ENCODE measurements at regions of chr2 and their contacts with region 1.

Region 1: DNA sequence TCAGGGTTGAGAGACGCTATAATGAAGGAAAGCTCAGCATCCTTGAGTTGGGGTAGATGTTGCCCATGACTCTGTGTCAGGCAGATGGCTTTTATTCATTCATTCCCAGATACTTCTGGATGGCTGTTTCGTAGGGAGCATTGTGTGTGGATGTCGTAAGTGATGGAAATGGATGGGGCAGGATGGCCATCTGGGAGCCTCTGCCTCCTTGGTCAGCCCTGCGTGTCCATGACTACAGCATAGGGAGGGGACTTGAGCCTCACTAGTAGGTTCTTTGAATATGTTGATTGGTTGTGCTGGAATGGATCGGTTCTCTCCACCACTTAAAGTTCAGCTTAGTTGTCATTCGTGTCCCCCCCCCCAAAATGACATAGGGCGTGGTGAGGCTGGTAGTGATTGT is 44.9 kb downstream of the TGOLN2 start:
- DNase-seq: no peak
- H3K4me3 ChIP-seq: no peak overlapping the region
- H3K27ac ChIP-seq: no peak overlapping the region
- H3K4me1 ChIP-seq: no peaks in the 10 kb centered on the region
- H3K27me3 ChIP-seq: no peaks in the 10 kb centered on the region
- CTCF ChIP-seq: no peak
- POLR2A ChIP-seq: no peak

Region 2: GRCh38 chr2:84817239-84817655 is 465.7 kb before region 1 on chr2:
- intact Hi-C with region 1: no loop called
- DNase-seq: no peak
- H3K4me3 ChIP-seq: no peak overlapping the region
- H3K27ac ChIP-seq: no peak overlapping the region
- H3K4me1 ChIP-seq: no peaks in the 10 kb centered on the region
- H3K27me3 ChIP-seq: no peaks in the 10 kb centered on the region
- CTCF ChIP-seq: no peak
- POLR2A ChIP-seq: no peak

Region 3: GRCh38 chr2:85066874-85067351 is 216.0 kb before region 1 on chr2:
- intact Hi-C with region 1: loop called in 1 of 2 experiments (anchors 5 kb)
- DNase-seq: peak; percentile 57 to 92 (median 81)
- H3K4me3 ChIP-seq: peak overlapping the region in 1 of 4 donors; percentile 41
- H3K27ac ChIP-seq: no peak overlapping the region
- H3K4me1 ChIP-seq: peaks cover 0 to 3% of the 10 kb centered on the region in 2 donors
- H3K27me3 ChIP-seq: no peaks in the 10 kb centered on the region
- CTCF ChIP-seq: peak; percentile 62 to 84 (median 70)
- POLR2A ChIP-seq: no peak

Region 4: DNA sequence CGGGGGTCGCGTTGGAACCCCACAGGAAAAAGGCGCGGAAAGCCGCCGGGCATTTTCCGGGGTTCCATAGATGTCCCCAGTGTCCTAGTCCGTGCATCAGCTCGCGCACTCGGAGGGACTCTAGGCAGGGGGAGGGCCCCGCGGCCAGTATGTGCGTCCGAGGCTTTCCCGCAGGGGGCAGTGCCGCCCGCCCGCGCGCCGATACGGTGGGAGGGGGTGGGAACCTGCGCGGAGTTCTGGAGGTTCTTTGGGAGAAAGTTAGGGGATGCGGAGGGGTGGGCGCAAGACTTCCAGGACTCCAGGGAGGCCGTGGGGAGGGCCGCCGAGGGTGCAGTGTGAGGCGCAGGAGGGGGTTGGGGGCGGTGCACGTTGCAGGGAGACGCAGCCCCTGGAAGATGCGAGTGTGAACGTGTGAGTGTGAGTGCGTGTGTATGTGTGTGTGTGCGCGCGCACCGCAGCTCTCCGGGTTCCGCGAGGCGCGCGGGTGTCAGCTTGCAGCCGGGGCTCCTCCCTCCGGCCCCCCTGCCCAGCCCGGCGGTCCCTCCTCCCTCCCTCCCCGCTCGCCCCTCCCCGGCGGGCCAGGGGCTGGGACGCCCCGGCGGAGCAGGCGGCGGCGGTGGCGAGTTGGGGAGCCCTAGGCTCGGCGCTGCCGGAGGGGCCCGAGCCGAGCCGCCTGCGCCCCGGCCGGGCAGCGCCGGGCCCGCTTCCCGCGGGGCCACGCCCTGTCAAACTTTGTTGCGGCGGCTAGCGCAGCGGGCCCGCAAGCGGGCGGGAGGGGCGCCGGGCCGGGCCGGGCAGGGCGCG is 149.9 kb before region 1 on chr2 and contains the start of gene TCF7L1:
- intact Hi-C with region 1: loop called (anchors 5 kb)
- DNase-seq: peak; percentile 43 to 83 (median 68)
- H3K4me3 ChIP-seq: peak within 1 kb of the TSS in 3 of 4 donors; percentile 45 to 86 (median 78)
- H3K27ac ChIP-seq: peak within 1 kb of the TSS in 3 of 5 donors; percentile 47 to 79 (median 61)
- H3K4me1 ChIP-seq: peaks cover 3 to 8% of the 10 kb centered on the region in 2 donors
- H3K27me3 ChIP-seq: no peaks in the 10 kb centered on the region
- CTCF ChIP-seq: peak; percentile 33 to 75 (median 58)
- POLR2A ChIP-seq: no peak
- total RNA-seq, gene TCF7L1: 0.36 to 6.3 (median 2.9) TPM